ENCODE measurements at regions of chr9 and their contacts with region 1.

Region 1: DNA sequence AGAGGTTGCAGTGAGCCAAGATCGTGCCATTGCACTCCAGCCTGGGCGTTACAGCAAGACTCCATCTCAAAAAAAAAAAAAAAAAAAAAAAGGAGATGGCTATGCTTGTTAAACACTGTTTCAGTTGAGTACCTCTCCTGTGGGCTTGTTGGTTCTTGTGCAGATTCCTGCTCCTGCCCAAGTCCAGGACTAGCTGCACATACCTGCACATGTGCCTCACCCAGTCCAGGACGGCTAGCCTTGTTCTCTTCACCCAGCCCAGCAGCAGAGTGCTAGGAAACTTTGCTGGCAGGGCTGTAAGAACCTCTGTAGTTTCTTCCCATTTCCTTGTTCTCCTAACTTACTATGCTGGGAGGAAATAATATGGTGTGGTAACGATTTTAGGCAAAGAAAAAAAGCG is 234.1 kb upstream of the DMRT1 start:
- DNase-seq: no peak

Region 2: DNA sequence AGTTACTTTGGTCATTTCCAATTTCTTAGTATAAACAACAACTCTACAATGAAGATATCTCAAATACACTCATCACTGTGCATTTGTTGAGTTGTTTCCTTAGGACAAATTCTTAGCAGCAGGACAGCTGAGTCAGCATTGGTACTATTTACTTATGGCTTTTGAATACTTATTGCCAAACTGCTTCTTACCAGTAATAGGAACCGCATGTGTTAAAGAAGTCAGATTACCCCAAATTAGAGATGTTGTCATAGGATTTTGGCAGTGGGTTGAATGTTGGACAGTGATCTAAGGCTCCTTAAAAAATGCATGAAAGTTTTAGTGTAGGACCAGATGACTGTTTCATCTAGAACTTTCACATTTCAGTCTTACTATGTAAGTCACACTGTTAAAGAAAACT is 46.0 kb before region 1 on chr9:
- intact Hi-C with region 1: no loop called
- DNase-seq: no peak

Region 3: DNA sequence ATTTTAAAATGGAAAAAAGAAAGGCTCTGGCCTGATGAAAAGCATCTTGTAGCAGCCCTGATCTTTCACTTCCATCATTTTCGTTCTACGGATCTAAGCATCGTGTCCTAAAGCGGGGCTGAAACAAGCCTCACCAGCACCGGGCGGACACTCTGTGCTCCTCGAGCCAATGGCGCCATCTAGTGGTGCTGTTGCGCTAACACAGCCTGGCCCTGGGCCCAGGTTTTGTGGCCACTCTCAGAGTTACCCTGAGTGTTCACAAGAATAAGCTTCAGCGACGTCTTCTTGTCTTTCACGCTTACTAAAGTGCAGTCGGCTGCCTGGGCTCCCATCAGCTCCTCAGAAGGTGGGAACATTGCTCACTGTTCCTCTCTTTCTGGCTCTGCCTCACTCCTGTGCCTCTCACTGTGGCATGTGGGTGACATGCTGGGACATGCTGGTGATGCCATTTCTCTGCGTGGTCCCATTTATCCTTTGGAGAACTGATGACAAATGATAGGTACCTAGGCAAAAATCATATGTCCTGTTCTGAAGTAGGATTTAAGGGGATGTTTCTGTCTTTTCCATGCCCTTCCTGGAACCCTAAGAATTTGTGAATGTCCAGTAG is 401.8 kb after region 1 on chr9:
- intact Hi-C with region 1: loop called (anchors 5 kb)
- DNase-seq: peak; percentile 67 to 97 (median 90)

Measured in posterior cingulate gyrus (tissue), 11 donors.